ENCODE measurements at regions of chr6 and their contacts with region 1.

Region 1: GRCh38 chr6:13574149-13574570 is 241 bp upstream of the SIRT5 start:
- DNase-seq: peak; percentile 98
- H3K4me3 ChIP-seq: peak overlapping the region; percentile 76
- H3K27ac ChIP-seq: peak overlapping the region; percentile 89
- H3K4me1 ChIP-seq: peaks cover 23% of the 10 kb centered on the region
- CTCF ChIP-seq: peak; percentile 64

Region 2: GRCh38 chr6:13395272-13396237 is 178.6 kb before region 1 on chr6:
- CTCF ChIA-PET with region 1: no interaction called
- POLR2A ChIA-PET with region 1: no interaction called
- intact Hi-C with region 1: loop called (anchors 2 kb)
- DNase-seq: peak; percentile 32
- H3K4me3 ChIP-seq: peak overlapping the region; percentile 46
- H3K27ac ChIP-seq: no peak overlapping the region
- H3K4me1 ChIP-seq: peaks cover 73% of the 10 kb centered on the region
- CTCF ChIP-seq: no peak

Region 3: DNA sequence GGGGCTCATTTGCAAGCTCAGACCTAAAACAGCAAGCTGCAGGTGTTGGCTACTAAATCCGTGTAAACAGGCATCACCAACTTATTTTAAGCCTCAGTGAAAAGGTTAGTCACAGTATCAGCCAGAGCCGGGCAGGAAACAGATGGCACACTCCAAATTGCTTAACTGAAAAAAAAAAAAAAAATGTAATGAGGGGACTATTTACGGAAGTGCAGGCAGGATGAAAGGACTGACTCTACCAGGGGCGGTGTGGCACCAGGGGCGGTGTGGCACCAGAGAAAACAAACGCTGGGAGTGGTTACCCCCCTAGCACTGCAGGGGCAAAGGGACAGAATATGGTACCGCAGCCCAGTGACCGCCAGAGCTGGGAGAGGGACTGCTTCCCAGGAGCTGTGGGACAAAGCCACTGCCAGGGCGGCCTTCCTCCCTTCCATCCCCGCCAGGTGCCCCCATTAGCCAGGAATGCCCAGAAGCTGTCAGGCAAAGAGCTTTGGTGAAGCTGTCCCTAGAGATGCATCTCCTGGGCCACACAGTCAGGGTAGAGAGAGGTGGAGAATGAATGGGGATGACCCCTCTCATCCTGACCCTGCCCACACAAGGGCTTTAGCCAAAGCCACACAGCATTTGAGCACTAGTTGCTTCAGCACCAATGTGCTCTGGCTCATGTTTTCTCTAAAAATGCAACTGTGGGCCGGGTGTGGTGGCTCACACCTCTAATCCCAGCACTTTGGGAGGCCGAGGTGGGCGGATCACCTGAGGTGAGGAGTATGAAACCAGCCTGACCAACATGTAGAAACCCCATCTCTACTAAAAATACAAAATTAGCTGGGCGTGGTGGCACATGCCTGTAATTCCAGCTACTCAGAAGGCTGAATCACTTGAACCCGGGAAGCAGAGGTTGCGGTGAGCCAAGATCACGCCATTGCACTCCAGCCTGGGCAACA is 47.2 kb before region 1 on chr6:
- CTCF ChIA-PET with region 1: interaction called, 5 read pairs
- POLR2A ChIA-PET with region 1: interaction called, 9 read pairs
- intact Hi-C with region 1: loop called (anchors 1 kb)
- DNase-seq: peak; percentile 98
- H3K4me3 ChIP-seq: peak overlapping the region; percentile 59
- H3K27ac ChIP-seq: peak overlapping the region; percentile 99
- H3K4me1 ChIP-seq: peaks cover 84% of the 10 kb centered on the region
- CTCF ChIP-seq: peak; percentile 55

Region 4: GRCh38 chr6:13614926-13615798 is 41.0 kb after region 1 on chr6 and contains the start of gene NOL7:
- CTCF ChIA-PET with region 1: interaction called, 6 read pairs
- POLR2A ChIA-PET with region 1: interaction called, 26 read pairs
- intact Hi-C with region 1: loop called (anchors 1 kb)
- DNase-seq: peak; percentile 99
- H3K4me3 ChIP-seq: peak within 1 kb of the TSS; percentile 98
- H3K27ac ChIP-seq: peak within 1 kb of the TSS; percentile 73
- H3K4me1 ChIP-seq: peaks cover 54% of the 10 kb centered on the region
- CTCF ChIP-seq: peak; percentile 81
- total RNA-seq, gene NOL7: 67.5 and 92.4 TPM in 2 replicates

Region 5: GRCh38 chr6:13630499-13630898 is 56.3 kb after region 1 on chr6:
- CTCF ChIA-PET with region 1: no interaction called
- POLR2A ChIA-PET with region 1: no interaction called
- intact Hi-C with region 1: no loop called
- DNase-seq: no peak
- H3K4me3 ChIP-seq: no peak overlapping the region
- H3K27ac ChIP-seq: no peak overlapping the region
- H3K4me1 ChIP-seq: peaks cover 6% of the 10 kb centered on the region
- CTCF ChIP-seq: no peak

Region 6: GRCh38 chr6:13641315-13641714 is 67.2 kb after region 1 on chr6:
- CTCF ChIA-PET with region 1: no interaction called
- POLR2A ChIA-PET with region 1: no interaction called
- intact Hi-C with region 1: no loop called
- DNase-seq: no peak
- H3K4me3 ChIP-seq: no peak overlapping the region
- H3K27ac ChIP-seq: no peak overlapping the region
- H3K4me1 ChIP-seq: peaks cover 4% of the 10 kb centered on the region
- CTCF ChIP-seq: no peak

Region 7: GRCh38 chr6:13814176-13814937 is 240.2 kb after region 1 on chr6 and contains the start of gene MCUR1:
- CTCF ChIA-PET with region 1: no interaction called
- POLR2A ChIA-PET with region 1: no interaction called
- intact Hi-C with region 1: loop called (anchors 2 kb)
- DNase-seq: peak; percentile 94
- H3K4me3 ChIP-seq: peak within 1 kb of the TSS; percentile 86
- H3K27ac ChIP-seq: peak within 1 kb of the TSS; percentile 87
- H3K4me1 ChIP-seq: peaks cover 30% of the 10 kb centered on the region
- CTCF ChIP-seq: peak; percentile 38; the same call in 1 of the 2 replicates
- total RNA-seq, gene MCUR1: 11.9 and 17.3 TPM in 2 replicates